ENCODE measurements at regions of chr15 and their contacts with region 1.

Region 1: DNA sequence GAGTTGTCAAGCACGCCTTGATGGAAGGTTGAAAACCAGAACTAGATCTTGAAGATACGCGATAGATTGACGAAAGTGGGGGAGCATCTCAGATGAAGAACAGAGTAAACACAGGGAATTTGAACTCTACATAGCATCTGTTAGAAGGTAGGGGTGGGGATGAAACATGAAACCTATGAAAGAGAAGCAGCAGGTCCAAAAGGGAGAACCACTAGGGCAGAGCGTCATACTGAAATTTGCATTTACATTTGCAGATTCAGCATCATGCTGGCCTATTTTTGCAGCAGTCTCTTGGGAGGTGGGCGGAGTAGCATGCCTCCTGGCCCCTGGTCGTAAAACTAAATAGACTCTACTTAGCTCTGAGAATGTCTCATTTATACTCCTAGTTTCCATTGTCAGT is 46.1 kb upstream of the RASGRP1 start:
- DNase-seq: peak; percentile 68
- ATAC-seq: peak; percentile 60
- H3K4me3 Mint-ChIP-seq: peak overlapping the region; percentile 71
- H3K27ac Mint-ChIP-seq: peak overlapping the region; percentile 98
- H3K4me1 Mint-ChIP-seq: peaks cover 73% of the 10 kb centered on the region
- H3K27me3 Mint-ChIP-seq: no peaks in the 10 kb centered on the region

Region 2: DNA sequence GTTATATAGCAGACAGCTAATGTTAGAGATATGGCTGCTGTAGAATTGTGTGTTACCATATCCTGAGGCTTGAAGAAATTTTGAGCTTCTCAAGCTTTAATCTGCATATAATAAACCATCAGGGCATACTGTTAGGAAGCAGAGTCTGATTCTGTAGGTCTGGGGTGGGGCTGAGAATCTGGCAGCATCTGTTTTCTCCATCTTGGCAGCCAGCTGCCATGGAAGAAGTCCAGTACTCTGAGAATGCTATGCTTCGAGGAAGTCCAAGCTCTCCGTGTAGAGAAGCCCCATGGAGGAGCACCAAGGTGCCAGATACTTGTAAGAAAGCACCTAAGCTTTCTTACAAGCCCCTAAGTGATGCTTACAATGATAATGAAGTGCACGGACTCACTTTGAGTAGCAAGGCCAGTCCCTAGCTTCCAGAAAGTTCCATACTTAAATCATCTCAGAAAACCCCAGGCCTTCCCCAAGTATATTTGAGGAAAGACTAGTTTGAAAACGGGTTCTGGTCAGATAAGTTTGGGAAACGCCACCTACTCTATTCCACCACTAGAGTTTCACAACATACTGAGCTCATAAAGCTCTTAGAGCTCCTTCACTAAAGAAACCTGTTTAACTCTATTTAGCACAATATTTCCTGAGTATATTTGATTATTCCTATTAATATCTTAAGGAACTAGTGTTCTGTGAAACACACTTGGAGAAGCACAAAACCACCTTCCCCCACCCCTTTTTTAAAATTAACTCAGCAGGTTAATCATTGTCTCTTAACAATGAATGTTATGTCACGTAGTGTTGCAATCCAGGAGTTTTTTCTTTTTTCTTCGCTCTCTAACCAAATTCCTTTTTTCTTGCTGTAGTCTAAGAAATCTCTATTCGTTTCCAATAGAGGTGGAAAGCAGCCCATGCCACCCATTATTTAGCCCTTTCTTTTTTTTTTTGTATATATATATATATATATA is 13.8 kb after region 1 on chr15:
- CTCF ChIA-PET with region 1: interaction called, 15 read pairs
- POLR2A ChIA-PET with region 1: interaction called, 7 read pairs
- DNase-seq: no peak
- ATAC-seq: no peak
- H3K4me3 Mint-ChIP-seq: no peak overlapping the region
- H3K27ac Mint-ChIP-seq: no peak overlapping the region
- H3K4me1 Mint-ChIP-seq: peaks cover 32% of the 10 kb centered on the region
- H3K27me3 Mint-ChIP-seq: no peaks in the 10 kb centered on the region

Region 3: GRCh38 chr15:38631126-38632075 is 20.7 kb after region 1 on chr15:
- CTCF ChIA-PET with region 1: interaction called, 15 read pairs
- POLR2A ChIA-PET with region 1: interaction called, 11 read pairs
- DNase-seq: no peak
- ATAC-seq: no peak
- H3K4me3 Mint-ChIP-seq: no peak overlapping the region
- H3K27ac Mint-ChIP-seq: peak overlapping the region; percentile 51
- H3K4me1 Mint-ChIP-seq: peaks cover 32% of the 10 kb centered on the region
- H3K27me3 Mint-ChIP-seq: no peaks in the 10 kb centered on the region